ENCODE measurements at regions of chr14 and their contacts with region 1.

Region 1: GRCh38 chr14:34018564-34019244 is 67.8 kb upstream of the EGLN3 start:
- DNase-seq: peak; percentile 78
- H3K4me3 Mint-ChIP-seq: peak overlapping the region; percentile 88
- H3K27ac Mint-ChIP-seq: peak overlapping the region; percentile 97
- H3K4me1 Mint-ChIP-seq: peaks cover 30% of the 10 kb centered on the region
- H3K27me3 Mint-ChIP-seq: peaks cover 2% of the 10 kb centered on the region

Region 2: DNA sequence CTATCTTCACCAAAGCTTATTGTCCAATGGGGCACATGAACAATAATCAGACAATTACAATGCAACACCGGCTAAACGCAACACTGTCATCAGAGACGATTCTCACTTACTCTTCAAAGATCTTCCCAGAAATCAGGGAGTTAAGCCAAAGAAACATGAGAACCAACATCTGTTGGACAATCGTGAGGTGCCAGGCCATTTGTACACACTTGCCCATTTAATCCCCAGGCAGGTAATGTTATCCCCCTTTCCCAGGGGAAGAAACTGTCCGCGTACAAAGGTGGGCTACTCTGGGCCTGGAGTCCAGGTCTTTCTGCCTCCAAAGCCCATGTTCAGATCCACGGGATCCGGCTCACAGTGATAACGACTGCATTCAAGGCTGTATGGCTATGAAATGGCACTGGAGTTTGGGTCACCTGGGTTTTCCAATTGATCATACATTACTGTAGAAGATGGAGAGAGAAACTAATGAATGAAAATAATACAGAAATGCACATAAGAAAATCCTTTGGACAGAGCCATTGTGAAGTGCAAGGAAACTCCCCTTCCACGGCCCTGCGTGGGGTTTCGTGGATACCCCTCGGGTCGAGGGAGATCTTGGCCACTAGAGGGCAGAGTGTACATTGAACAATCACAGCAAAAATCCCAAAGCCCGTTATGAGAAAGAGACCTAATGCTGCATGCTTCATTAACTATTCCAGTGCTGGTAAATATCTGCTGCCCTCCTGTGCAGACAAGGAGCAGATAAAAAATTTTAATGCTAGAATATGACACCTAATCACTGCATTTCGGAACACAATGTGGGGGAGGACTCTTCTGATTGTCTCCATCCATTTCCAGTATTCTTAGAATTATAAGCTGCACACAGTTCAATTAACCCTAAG is 179.3 kb before region 1 on chr14:
- intact Hi-C with region 1: loop called (anchors 10 kb)
- DNase-seq: peak; percentile 89
- H3K4me3 Mint-ChIP-seq: no peak overlapping the region
- H3K27ac Mint-ChIP-seq: no peak overlapping the region
- H3K4me1 Mint-ChIP-seq: peaks cover 38% of the 10 kb centered on the region
- H3K27me3 Mint-ChIP-seq: no peaks in the 10 kb centered on the region

Region 3: GRCh38 chr14:33950320-33951182 is 68.2 kb before region 1 on chr14 and contains the start of gene EGLN3:
- intact Hi-C with region 1: loop called (anchors 2 kb)
- DNase-seq: peak; percentile 95
- H3K4me3 Mint-ChIP-seq: peak within 1 kb of the TSS; percentile 87
- H3K27ac Mint-ChIP-seq: peak within 1 kb of the TSS; percentile 75
- H3K4me1 Mint-ChIP-seq: peaks cover 36% of the 10 kb centered on the region
- H3K27me3 Mint-ChIP-seq: peaks cover 47% of the 10 kb centered on the region
- total RNA-seq, gene EGLN3: 17.4 and 17.6 TPM in 2 replicates

Region 4: GRCh38 chr14:34059855-34060638 is 41.3 kb after region 1 on chr14:
- intact Hi-C with region 1: loop called (anchors 5 kb)
- DNase-seq: peak; percentile 91
- H3K4me3 Mint-ChIP-seq: peak overlapping the region; percentile 86
- H3K27ac Mint-ChIP-seq: peak overlapping the region; percentile 87
- H3K4me1 Mint-ChIP-seq: peaks cover 35% of the 10 kb centered on the region
- H3K27me3 Mint-ChIP-seq: peaks cover 10% of the 10 kb centered on the region

Region 5: DNA sequence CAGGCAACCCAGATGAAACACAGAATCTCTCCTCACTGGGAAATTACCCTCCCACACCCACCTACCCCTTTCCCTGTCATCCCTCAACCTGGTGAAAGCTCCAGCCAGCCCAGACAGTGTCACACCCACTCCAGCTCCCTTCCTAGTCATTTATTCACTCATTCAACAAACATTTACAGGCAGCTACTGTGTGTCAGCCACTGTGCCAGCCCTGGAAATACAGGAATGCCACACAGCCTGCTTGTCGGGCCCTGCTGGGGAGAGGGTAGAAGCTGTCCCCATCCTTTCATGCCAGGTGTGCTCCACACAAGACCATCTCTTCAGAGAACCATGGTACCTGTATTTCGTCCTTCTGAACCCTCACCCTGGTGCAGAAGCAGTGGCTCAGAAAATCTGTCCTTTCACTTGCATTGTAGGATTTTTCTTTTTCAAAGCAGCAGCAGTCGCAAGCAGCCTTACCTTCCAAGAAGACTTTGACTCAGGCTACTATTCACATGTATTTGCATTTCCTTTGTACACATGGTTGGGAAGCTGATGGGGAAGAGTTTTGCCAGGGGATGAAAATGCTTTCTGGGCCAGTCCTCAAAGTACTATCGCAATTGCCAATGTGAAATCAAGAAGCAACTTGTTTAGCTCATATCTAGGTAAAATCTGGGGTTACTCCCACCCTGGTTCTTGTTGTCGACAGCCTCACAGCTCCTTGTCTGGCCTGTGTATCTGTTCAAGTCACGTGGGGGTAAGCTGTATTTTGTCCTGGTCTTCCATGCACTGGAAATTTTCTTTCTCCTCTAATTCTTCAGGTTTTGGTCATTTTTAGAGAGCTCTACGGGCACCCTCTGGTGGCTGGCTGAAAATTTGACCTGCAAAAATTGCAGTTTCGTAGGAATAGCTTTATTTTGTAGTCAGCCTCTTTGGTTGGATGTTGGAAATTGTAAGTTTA is 79.6 kb after region 1 on chr14:
- intact Hi-C with region 1: loop called (anchors 10 kb)
- DNase-seq: peak; percentile 82
- H3K4me3 Mint-ChIP-seq: no peak overlapping the region
- H3K27ac Mint-ChIP-seq: peak overlapping the region; percentile 12
- H3K4me1 Mint-ChIP-seq: peaks cover 42% of the 10 kb centered on the region
- H3K27me3 Mint-ChIP-seq: peaks cover 2% of the 10 kb centered on the region